Gastrocnemius medialis (tissue), 4 donors: ENCODE measurements at regions of chr16 and their contacts with region 1.

Region 1: DNA sequence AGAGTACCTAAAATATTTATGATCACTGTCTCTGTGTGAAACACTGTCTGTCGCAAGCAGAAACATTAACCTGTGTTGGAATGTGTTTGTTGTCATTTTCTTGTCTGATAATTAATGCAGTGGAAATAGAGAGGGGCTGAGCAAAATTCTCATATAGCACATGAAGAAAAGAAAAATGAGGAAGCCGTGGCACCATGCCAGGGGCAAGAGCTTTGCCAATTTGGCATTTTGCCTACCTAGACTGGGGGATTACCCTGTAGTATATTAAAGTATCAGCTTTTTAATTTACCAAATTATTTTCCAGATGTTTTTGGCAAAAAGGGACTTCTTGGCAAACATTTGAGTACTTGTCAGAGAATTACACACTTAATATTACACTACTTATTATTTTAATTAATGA is 1326.6 kb upstream of the GOT2 start:
- DNase-seq: no peak
- ATAC-seq: no peak
- H3K4me3 ChIP-seq: no peak overlapping the region
- H3K27ac ChIP-seq: no peak overlapping the region
- H3K4me1 ChIP-seq: no peaks in the 10 kb centered on the region
- H3K27me3 ChIP-seq: no peaks in the 10 kb centered on the region
- CTCF ChIP-seq: no peak
- POLR2A ChIP-seq: no peak

Region 2: DNA sequence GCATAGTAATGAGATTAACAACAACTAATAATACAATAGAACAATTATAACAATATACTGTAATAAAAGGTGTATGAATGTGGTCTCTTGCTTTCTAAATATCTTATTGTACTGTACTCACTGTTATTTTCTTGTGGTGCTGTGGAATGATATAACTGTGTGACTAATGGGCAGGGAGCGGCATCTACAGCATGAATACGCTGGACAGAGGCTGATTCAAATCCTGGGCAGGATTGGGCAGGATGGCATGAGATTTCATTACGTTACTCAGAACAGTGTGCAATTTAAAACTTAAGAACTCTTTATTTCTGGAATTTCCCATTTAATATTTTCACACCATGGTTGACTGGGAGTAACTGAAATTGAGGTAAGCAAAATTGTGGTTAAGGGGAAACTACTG is 86.8 kb before region 1 on chr16:
- in situ Hi-C with region 1: loop called in 1 of 4 experiments (anchors 25 kb)
- intact Hi-C with region 1: no loop called
- DNase-seq: no peak
- ATAC-seq: no peak
- H3K4me3 ChIP-seq: no peak overlapping the region
- H3K27ac ChIP-seq: no peak overlapping the region
- H3K4me1 ChIP-seq: no peaks in the 10 kb centered on the region
- H3K27me3 ChIP-seq: no peaks in the 10 kb centered on the region
- CTCF ChIP-seq: no peak
- POLR2A ChIP-seq: no peak

Region 3: DNA sequence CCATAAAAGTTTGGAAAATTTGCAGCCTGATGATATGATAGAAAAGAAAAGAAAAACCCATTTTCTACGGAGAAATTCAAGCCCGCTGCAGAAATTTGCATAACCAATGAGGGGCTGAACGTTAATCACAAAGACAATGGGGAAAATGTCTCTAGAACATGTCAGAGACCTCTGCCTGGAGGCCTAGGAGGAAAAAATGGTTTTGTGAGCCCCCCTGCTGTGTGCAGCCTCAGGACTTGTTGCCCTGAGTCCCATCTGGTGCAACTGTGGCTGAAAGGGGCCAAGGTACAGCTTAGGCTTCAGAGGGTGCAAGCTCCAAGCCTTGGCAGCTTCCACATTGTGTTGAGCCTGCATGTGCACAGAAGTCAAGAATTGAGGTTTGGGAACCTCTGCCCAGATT is 59.2 kb before region 1 on chr16:
- in situ Hi-C with region 1: no loop called
- intact Hi-C with region 1: no loop called
- DNase-seq: no peak
- ATAC-seq: no peak
- H3K4me3 ChIP-seq: no peak overlapping the region
- H3K27ac ChIP-seq: no peak overlapping the region
- H3K4me1 ChIP-seq: no peaks in the 10 kb centered on the region
- H3K27me3 ChIP-seq: no peaks in the 10 kb centered on the region
- CTCF ChIP-seq: no peak
- POLR2A ChIP-seq: no peak